AG04449 (cell line): ENCODE measurements at regions of chr20 and their contacts with region 1.

Region 1: DNA sequence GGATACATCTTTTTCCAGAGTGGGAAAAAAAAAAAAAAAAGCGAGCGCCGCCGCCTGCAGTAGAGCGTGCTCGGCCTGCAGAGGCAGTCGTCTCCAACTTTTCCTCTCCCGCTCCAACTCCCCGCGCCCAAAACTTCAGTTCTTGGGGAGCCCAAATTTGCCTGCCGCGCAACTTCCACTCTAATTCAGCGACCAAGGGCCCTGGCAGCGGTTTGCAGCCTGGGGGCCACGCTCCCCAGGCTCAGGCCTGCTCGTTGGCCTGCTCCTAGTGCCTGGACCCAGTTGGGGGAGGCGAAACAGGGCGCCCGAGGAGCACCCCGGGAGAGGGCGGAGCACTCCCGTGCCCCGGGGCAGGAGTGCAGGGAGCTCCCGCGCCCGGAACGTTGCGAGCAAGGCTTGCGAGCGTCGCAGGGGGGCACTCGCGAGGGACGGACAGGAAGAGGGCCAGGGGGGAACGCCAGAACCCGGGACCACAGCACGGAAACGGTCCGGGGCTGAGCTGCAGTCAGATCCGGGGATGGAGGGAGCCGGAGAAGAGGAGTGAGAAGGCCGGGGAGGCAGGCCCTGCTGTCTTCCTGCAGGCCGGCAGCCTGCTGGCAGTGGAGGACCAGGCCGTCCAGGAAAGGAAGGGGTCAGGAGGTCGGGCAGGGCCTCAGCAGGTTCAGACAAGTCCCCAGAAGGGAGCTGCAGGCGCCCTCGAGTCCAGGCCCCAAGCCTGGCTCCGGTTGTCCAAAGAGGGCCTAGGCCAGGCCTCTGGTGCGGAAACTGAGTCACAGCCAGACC is at the start of gene STX16:
- DNase-seq: peak; percentile 57
- H3K4me3 ChIP-seq: peak within 1 kb of the TSS; percentile 87
- CTCF ChIP-seq: peak; percentile 75

Region 2: DNA sequence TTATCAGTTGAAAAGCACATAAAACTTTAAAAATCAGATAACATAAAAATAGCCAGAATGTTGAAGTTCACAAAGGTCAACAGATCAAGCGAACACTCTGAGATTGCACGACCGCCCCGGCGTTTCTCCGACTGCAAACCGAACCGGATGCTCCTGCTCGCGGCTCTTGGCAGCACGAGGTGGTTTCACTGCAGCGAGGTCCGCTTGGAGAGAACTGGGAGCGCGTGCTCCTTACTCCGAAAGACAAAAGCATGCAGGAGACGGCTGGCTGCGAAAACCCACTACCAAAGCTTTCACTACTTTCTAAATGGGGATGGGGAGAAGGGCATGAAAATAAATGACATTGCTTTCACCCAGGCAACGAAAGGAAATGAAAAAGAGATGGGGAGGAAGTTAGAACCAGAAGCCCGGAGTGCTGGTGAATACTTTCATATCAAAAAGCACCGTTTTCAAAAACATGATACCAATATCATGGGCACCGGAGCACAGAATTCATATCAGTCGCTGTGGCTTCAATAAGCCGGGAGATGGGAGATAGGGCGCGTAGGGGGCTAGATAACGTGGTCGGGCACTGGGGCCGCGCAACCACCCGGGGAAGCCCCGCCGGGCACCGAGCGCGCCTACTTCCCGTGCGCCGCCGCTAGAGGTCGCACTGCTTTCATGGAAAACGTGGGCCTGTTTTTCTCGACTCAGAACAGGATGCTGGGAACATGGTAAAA is 414.2 kb before region 1 on chr20:
- CTCF ChIA-PET with region 1: interaction called, 11 read pairs
- POLR2A ChIA-PET with region 1: interaction called, 4 read pairs
- DNase-seq: no peak
- H3K4me3 ChIP-seq: peak overlapping the region; percentile 59
- CTCF ChIP-seq: peak; percentile 93

Region 3: DNA sequence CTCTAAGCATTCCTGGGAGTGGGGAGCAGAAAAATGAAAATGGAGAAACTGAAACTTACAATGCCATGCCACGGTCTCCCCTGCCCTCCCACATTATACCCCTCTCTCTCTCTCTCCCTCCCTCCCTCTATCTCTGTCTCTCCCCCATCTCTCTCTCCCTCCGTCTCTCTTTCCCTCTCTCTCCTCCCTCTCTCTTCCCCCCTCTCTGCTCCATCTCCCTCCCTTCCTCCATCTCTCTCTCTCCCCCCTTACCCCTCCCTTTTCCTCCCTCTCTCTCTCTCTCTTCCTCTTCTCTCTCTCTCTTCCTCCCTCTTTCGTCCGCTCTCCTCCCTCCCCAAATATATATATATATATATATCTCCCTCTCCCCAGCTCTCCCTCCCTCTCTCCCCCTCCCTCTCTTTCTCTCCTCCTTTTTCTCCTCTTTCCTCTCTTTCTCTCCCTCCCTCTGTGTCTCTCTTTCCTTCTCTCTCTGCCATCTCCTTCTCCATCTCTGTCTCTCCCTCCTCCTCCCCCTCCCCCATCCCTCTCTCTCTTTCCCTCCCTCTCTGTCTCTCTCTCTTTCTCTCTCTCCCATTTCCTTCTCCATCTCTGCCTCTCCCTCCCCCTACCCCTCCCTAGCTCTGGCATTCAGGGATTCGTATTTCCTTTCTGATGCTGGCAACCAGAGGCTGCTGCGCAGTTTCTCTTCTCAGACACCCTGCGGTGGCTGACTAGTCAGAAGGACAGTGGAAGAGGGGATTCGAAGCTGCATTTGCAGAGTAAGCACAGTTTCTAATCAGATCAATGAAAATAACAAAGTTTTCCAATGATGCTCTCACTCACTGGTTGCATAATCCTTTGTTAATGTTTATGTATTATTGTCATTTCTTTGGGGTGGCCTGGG is 275.8 kb before region 1 on chr20:
- CTCF ChIA-PET with region 1: no interaction called
- POLR2A ChIA-PET with region 1: no interaction called
- DNase-seq: no peak
- H3K4me3 ChIP-seq: no peak overlapping the region
- CTCF ChIP-seq: no peak

Region 4: DNA sequence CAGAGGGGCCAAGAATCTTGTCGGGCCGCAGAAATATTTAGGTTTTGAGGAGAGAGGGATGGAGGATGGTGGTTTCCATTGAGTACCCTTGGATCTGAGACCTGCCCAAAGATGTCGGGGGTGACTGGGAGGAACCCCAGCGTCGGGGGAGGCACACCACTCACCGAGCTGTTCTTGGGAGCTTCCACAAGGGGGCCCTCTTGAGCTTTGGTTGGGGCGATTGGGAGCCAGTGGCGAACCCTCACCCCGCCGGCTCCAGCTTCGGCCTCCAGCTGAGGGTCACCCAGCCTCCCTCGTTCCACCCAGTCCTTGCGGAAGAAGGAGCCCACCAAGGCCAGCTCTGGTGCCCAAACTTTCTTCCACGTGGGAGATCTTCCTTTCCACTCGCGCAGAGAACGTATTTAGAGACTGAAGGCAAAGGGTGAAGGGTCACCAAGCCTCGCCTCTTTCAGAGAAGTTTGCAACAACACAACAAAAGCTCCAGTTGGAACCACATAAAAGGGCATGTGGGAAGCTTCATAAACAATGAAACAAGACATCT is 169.4 kb before region 1 on chr20:
- CTCF ChIA-PET with region 1: interaction called, 11 read pairs
- POLR2A ChIA-PET with region 1: no interaction called
- DNase-seq: no peak
- H3K4me3 ChIP-seq: no peak overlapping the region
- CTCF ChIP-seq: peak; percentile 62

Region 5: DNA sequence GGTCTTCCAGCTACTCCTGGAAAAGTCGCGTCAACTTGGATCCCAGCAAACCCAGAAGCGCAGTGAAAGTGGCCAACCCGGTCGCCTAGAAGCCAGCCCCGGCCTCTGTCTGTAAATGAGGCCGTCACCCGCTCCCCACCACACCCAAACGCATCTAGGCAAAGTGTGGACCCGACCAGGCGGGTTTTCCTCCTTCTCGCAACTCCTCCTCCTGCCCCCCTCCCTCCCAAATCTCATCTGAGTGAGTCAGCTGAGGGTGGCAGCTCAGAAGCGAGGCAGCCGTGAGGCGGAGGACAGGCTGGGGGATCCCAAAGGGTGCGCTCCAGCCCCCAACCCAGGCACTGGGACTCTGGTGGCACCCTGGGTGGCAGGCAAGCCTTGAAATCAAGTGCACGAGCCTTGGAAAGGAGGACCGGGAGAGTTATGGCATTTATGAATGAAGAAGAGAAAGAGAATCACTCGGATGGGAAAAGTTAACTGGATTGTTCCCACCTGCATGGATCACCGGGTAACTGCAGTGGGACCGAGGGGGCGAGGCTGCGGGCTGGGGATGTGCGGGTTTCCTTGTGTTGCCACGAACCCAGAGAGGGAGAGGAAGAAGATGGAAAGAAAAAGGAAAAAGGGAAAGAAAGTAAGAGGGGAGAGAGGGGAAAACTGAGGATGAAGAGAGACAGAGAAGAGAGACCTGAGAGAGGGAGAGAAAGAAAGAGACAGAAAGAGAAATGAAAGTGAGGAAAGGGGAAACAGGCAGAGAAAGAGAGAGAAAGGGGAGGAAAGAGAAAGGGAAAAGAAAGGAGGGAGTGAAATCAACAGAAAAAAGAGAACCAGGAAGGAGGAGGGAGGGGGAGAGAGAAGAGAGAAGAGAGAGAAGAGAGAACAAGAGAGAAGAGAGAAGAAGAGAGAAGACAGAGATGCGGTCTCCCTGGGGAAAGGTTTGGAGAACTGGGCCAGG is 135.5 kb before region 1 on chr20 and contains the start of gene APCDD1L:
- CTCF ChIA-PET with region 1: interaction called, 3 read pairs
- POLR2A ChIA-PET with region 1: interaction called, 26 read pairs
- DNase-seq: peak; percentile 41
- H3K4me3 ChIP-seq: peak within 1 kb of the TSS; percentile 78
- CTCF ChIP-seq: no peak

Region 6: GRCh38 chr20:58542411-58543095 is 108.4 kb before region 1 on chr20:
- CTCF ChIA-PET with region 1: interaction called, 5 read pairs
- POLR2A ChIA-PET with region 1: interaction called, 19 read pairs
- DNase-seq: no peak
- H3K4me3 ChIP-seq: no peak overlapping the region
- CTCF ChIP-seq: no peak